ENCODE measurements at regions of chr4 and their contacts with region 1.

Region 1: DNA sequence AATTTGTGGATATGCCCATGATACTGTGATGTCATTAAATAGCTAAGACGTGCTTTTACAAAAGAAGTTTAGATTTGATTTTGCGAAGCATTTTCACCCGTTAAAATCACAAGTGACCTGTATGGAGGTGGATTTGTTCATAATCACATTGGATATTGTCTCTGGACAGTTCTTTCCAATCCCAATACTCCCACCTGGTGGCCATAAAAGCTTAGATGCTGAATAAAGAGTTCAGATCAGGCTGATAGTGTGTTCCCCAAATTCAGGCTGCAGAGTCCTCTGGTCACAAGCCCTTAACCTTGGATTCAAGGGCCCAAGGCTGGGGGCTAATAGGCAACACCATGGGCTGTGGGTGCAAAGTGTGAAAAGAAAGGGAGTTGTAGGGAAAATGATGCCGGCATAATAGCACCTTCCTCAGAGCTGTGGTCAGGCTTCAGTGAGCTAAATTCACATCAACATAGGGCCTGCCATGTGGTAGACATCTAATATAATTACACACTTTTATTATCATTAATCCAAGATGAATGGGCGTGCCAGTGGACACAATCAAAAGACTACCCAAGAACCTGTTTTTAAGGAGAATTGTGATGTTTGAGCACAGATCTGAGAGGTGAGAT is 28.1 kb downstream of the SMIM43 start:
- DNase-seq: no peak
- H3K4me3 ChIP-seq: no peak overlapping the region
- CTCF ChIP-seq: peak; percentile 39

Region 2: DNA sequence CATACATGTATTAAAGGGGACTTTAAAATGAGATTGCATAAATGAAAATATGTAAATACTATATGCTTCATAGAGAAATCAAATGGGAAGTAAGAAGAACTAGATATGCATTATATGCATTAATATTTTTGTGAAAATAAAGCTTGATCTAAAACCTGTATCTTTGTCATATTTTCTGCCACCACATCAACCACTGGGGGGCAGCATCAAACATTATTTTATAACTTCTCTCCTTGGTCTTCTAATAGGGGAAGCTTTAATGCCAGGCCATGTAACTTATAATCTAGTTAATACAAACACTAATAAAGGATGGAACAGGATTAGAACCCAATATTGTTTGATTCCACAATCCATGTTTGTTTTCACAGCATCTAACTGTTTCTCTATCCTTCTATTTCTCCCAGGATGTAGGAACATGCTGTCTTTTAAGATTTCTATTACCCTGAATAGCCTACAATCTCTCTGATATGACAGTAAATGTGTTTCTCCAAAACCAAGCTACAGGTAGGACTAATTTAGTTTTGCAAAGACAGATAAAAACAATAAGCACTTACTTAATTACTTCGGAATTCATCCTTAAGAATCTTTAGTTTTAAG is 366.0 kb before region 1 on chr4:
- CTCF ChIA-PET with region 1: interaction called, 98 read pairs
- POLR2A ChIA-PET with region 1: no interaction called
- DNase-seq: no peak
- H3K4me3 ChIP-seq: no peak overlapping the region
- CTCF ChIP-seq: peak; percentile 39

Region 3: GRCh38 chr4:121484633-121485032 is 252.2 kb before region 1 on chr4:
- CTCF ChIA-PET with region 1: interaction called, 57 read pairs
- POLR2A ChIA-PET with region 1: no interaction called
- DNase-seq: peak; percentile 7
- H3K4me3 ChIP-seq: no peak overlapping the region
- CTCF ChIP-seq: peak; percentile 74

Region 4: GRCh38 chr4:121642292-121642691 is 94.6 kb before region 1 on chr4:
- CTCF ChIA-PET with region 1: no interaction called
- POLR2A ChIA-PET with region 1: no interaction called
- DNase-seq: no peak
- H3K4me3 ChIP-seq: no peak overlapping the region
- CTCF ChIP-seq: no peak

Region 5: GRCh38 chr4:121696581-121697461 is 40.0 kb before region 1 on chr4 and contains the start of gene ANXA5:
- CTCF ChIA-PET with region 1: interaction called, 12 read pairs
- POLR2A ChIA-PET with region 1: interaction called, 4 read pairs
- DNase-seq: peak; percentile 52
- H3K4me3 ChIP-seq: peak within 1 kb of the TSS; percentile 92
- CTCF ChIP-seq: peak; percentile 69

Region 6: DNA sequence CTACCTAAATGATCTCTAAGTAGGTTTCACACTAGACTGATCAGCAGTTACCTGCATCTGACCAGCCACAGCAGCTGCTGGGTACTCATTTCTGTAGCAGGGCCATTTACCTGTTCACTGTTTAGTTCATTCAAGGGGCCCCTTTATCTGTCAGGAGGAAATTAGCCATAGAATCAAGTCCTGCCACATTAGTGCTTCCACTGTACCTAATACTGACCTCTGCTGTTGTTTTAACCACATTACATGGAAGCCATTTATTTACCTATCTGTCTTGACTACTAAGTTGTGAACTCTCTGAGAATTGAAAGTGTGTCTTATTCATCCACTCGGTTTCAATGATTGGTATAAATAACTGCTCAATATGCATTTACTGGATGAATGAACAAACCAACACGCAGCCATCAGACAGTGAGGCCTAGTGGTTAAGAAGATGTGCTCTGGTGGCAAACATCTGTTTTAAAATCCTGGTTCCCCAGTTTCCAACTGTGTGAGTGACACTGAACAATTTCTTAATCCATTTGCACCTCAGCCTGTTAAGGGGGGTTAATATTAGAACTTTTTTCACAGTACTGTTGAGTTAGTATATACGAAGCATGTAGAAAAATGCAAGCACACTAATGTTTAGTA is 10.1 kb before region 1 on chr4:
- CTCF ChIA-PET with region 1: interaction called, 30 read pairs
- POLR2A ChIA-PET with region 1: no interaction called
- DNase-seq: no peak
- H3K4me3 ChIP-seq: no peak overlapping the region
- CTCF ChIP-seq: peak; percentile 51

Region 7: DNA sequence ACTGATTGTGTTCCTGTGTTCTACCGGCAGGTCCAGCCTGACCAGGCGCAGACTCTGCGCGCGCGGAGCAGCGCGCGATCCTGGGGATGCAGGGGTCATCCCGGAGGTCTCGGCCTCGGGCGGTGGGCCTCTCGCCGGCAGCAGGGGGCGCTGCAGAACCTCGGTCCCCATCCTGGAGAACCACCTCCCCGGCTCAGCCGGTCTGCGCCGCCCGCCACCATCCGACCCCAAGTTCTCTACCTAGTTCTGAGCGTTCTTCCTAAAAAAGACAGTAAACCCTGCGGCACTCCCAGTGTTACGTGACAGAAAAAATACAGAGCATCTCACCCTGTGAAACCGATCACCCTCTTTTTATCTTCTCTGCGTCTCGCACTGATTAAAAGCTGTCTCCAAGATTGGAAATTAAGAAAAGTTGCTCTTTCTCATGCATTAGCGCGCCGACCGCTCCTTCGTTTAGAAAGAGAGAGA is 213.4 kb after region 1 on chr4:
- CTCF ChIA-PET with region 1: no interaction called
- POLR2A ChIA-PET with region 1: no interaction called
- DNase-seq: no peak
- H3K4me3 ChIP-seq: peak overlapping the region; percentile 56
- CTCF ChIP-seq: peak; percentile 85

Measured in AG04449 (cell line).